Activated CD4-positive, alpha-beta memory T cell treated with anti-CD3 and anti-CD28 coated beads for 36 hours (primary cell): ENCODE measurements at regions of chr6 and their contacts with region 1.

Region 1: DNA sequence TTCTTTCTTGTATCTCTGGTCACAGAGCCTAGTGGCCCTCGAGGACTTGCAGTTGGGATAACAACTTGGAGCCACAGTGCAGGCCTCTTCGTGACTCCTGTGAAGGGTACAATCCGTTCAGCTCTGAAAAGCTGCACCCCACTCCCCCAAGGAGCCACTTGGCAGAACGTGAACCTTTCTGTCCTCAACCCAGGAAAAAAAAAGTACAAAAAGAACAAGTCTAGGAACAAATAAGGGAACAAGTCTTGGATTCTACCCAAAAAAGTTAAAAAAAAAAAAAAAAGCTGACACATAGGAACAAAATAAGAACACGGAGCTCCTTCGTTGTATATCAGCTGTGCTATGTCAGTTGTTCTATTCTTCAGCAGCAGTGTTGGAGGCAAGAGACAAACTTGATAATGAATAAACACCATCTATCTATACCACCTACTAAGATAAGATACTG is 77.9 kb upstream of the TULP1 start:
- DNase-seq: no peak
- H3K4me3 Mint-ChIP-seq: no peak overlapping the region
- H3K27ac Mint-ChIP-seq: no peak overlapping the region
- H3K4me1 Mint-ChIP-seq: peaks cover 73% of the 10 kb centered on the region
- H3K27me3 Mint-ChIP-seq: no peaks in the 10 kb centered on the region

Region 2: GRCh38 chr6:35624341-35625070 is 33.9 kb after region 1 on chr6:
- CTCF ChIA-PET with region 1: interaction called, 54 read pairs
- POLR2A ChIA-PET with region 1: no interaction called
- intact Hi-C with region 1: no loop called
- DNase-seq: no peak
- H3K4me3 Mint-ChIP-seq: no peak overlapping the region
- H3K27ac Mint-ChIP-seq: peak overlapping the region; percentile 43
- H3K4me1 Mint-ChIP-seq: peaks cover 25% of the 10 kb centered on the region
- H3K27me3 Mint-ChIP-seq: no peaks in the 10 kb centered on the region

Region 3: GRCh38 chr6:35876902-35877301 is 286.3 kb after region 1 on chr6:
- CTCF ChIA-PET with region 1: no interaction called
- POLR2A ChIA-PET with region 1: no interaction called
- intact Hi-C with region 1: no loop called
- DNase-seq: no peak
- H3K4me3 Mint-ChIP-seq: no peak overlapping the region
- H3K27ac Mint-ChIP-seq: no peak overlapping the region
- H3K4me1 Mint-ChIP-seq: no peaks in the 10 kb centered on the region
- H3K27me3 Mint-ChIP-seq: no peaks in the 10 kb centered on the region